Adrenal gland (tissue), 19 donors: ENCODE measurements at regions of chr1 and their contacts with region 1.

Region 1: DNA sequence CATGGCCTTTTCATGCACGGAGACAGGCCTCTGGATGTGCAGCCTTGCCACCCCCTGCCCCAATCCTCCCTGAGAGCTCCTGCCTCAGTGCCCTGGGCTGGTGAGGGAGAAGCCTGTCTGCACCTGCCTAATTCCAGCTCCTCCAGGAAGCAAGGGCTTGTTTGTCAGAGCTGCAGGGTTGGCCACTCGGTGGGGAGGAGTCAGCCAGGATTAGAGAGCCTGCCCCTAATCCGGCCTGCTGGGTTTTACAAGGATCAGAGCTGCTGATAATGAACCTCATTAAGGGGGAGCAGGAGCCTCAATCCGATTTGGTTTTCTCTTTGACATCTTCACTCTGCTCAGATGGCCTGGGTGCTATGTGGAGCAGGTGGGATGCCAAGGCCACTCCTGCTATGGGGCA is 31.9 kb upstream of the LHX4 start:
- DNase-seq: no peak
- H3K4me3 ChIP-seq: no peak overlapping the region
- H3K27ac ChIP-seq: no peak overlapping the region
- H3K4me1 ChIP-seq: peaks cover 0 to 6% of the 10 kb centered on the region in 2 donors
- H3K27me3 ChIP-seq: no peaks in the 10 kb centered on the region
- CTCF ChIP-seq: no peak
- POLR2A ChIP-seq: no peak

Region 2: DNA sequence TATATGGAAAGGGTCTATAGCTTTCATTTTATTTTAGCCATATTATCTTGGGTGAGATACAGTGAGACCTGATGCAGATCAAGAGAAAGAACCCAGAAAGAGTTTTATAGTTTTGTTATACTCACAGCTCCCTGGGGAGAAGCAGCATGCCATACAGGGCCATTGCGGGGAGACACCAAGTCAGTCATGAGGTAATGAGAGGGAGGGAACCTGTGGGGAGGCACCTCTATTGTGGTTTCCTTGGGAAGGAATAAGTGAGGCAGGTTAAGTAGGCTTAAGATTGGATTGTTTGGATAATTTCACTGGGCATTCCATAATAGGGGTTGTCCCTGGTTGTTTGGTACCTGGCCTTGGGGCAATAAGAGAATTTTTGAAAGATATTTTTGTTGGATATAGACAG is 812.7 kb before region 1 on chr1:
- intact Hi-C with region 1: no loop called
- DNase-seq: no peak
- H3K4me3 ChIP-seq: no peak overlapping the region
- H3K27ac ChIP-seq: no peak overlapping the region
- H3K4me1 ChIP-seq: no peaks in the 10 kb centered on the region
- H3K27me3 ChIP-seq: no peaks in the 10 kb centered on the region
- CTCF ChIP-seq: no peak
- POLR2A ChIP-seq: no peak

Region 3: GRCh38 chr1:180415985-180416633 is 217.9 kb after region 1 on chr1:
- intact Hi-C with region 1: loop called (anchors 10 kb)
- DNase-seq: no peak
- H3K4me3 ChIP-seq: no peak overlapping the region
- H3K27ac ChIP-seq: no peak overlapping the region
- H3K4me1 ChIP-seq: no peaks in the 10 kb centered on the region
- H3K27me3 ChIP-seq: no peaks in the 10 kb centered on the region
- CTCF ChIP-seq: peak; percentile 44 to 75 (median 61)
- POLR2A ChIP-seq: no peak

Region 4: DNA sequence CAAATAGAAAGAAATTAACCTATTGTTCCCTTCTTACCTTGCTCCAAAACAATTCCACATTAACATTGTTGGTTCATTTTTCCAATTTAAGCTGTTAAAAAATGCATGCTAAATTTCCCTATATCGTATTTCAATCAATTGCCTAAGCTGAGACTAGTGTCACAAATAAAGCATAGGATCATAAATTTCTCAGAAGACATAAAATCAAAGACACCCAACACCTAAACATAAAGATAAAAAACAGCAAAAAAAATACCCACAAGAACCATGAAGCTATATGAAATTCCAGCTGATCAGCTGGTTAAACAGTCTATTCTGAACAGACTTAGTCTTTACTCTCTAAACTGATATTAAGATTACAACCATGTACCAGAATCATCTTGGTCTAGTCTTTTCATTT is 271.8 kb after region 1 on chr1:
- intact Hi-C with region 1: loop called in 1 of 2 experiments (anchors 10 kb)
- DNase-seq: no peak
- H3K4me3 ChIP-seq: no peak overlapping the region
- H3K27ac ChIP-seq: no peak overlapping the region
- H3K4me1 ChIP-seq: no peaks in the 10 kb centered on the region
- H3K27me3 ChIP-seq: no peaks in the 10 kb centered on the region
- CTCF ChIP-seq: no peak
- POLR2A ChIP-seq: no peak